Activated CD4-positive, alpha-beta T cell treated with anti-CD3 and anti-CD28 coated beads, Interleukin-2, amount 10 ng/mL, durations not matched to agents 24 days and 14 days (primary cell): ENCODE measurements at regions of chrX and their contacts with region 1.

Region 1: DNA sequence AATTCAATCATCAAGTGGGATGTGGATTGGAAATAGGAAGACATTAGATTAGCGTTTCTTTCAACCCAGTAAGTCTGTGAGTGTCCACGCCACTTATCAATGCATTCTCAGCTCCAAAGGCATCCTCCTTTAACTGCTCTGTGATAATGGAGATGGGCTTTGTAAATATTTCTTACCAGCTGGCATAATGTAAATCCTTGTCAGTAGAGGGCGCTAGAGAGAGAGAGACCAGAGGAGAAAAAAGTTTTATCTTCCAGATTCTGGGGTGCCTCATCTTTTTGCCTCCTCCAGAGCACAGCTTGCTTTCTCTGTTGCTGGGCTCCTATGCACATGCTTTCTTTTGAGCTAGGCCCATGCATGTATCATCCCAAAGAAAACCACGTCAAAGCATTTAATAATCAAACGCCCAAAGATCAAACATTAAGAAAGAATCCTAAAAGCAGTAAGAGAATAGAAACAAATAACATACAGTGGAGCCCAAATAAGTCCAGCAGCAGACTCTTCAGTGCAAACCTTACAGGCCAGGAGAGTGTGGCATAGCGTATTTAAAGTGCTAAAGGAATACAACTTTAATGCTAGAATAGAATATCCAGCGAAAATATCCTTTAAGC is 9.6 kb upstream of the MTMR1 start:
- DNase-seq: peak; percentile 75
- H3K4me3 Mint-ChIP-seq: no peak overlapping the region
- H3K27ac Mint-ChIP-seq: no peak overlapping the region
- H3K4me1 Mint-ChIP-seq: peaks cover 8% of the 10 kb centered on the region
- H3K27me3 Mint-ChIP-seq: no peaks in the 10 kb centered on the region

Region 2: DNA sequence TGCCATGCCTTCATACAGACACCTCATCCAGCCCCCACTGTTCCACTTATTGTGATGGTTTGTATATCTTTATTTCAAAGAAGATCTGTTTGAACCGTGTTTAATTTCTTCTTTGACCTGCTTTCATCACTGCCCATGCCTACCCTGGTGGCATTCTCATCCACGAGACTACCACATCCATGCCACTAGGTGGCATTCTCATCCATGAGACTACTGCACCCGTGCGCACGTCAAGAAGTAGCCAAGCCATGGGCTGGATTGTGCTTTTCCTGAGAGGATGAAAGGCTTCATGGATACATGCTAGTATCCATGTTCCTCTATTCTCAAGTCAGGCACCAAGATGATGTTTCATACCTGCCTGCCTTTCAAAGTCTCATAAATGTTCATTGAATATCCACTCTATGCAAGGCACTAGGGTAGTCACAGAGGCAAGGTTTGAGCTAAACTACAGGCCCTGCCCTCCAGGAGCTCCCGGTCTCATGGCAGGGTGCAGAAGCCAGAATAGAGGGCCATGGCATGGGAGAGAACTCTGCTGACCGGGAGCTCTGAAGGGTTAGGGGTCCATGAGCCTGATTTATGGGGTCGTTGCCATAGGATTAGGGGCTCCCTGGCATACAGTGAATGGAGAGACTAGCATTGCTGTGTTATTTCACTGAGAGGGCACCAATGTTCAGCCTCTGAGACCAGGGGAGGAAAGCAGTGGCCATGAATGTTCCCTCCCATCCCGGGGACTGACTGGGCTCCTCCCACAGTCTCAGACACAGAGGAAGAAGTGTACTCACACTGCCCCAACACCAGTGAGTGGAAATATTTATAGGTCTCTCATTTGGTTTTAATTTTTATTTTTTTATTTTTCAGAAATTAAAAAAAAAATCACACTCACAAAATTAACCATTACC is 720.5 kb before region 1 on chrX:
- intact Hi-C with region 1: loop called (anchors 5 kb)
- DNase-seq: peak; percentile 74
- H3K4me3 Mint-ChIP-seq: no peak overlapping the region
- H3K27ac Mint-ChIP-seq: no peak overlapping the region
- H3K4me1 Mint-ChIP-seq: no peaks in the 10 kb centered on the region
- H3K27me3 Mint-ChIP-seq: no peaks in the 10 kb centered on the region

Region 3: DNA sequence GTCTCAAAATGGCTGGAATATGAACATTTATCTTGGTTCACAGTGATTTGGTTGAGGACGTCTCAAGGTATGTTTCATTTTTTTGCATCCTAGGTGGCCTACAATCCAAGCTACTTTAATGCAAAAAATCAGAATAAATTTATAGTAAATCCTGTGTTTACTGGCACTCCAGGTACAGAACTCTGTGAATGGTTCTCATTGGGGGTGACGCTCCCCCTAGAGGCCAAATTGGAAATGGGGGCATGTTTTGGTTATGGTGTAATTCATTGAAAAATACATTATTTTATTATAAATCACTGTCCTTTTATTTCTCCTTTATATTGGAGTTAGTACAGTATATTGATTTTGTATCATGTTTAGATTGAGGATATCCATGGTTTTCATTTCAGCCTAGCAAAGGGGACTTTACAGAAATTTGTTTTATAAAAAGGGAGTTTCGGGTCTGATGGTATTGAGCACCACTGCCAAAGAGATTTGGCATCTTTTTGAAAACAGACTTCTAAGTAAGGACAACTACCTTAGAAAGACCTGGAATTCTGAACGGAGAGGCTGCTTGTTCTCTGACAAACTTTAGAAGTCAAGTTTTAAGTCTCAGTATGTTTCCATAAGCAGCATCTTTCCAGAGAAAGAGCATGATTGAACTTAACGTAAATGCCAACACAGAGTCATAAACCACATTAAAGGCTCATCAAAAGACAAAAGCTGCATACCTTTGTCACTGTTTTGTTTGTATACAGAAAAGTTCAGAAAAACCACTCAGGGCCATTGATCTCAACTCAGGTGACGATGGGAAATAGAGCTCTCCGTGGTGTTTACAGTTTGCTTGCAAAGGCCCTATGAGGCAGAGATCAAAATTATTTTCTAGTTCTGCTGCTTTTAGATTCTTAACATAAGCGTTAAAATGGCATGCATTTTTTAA is 95.8 kb before region 1 on chrX:
- intact Hi-C with region 1: no loop called
- DNase-seq: peak; percentile 75
- H3K4me3 Mint-ChIP-seq: no peak overlapping the region
- H3K27ac Mint-ChIP-seq: no peak overlapping the region
- H3K4me1 Mint-ChIP-seq: peaks cover 20% of the 10 kb centered on the region
- H3K27me3 Mint-ChIP-seq: no peaks in the 10 kb centered on the region

Region 4: DNA sequence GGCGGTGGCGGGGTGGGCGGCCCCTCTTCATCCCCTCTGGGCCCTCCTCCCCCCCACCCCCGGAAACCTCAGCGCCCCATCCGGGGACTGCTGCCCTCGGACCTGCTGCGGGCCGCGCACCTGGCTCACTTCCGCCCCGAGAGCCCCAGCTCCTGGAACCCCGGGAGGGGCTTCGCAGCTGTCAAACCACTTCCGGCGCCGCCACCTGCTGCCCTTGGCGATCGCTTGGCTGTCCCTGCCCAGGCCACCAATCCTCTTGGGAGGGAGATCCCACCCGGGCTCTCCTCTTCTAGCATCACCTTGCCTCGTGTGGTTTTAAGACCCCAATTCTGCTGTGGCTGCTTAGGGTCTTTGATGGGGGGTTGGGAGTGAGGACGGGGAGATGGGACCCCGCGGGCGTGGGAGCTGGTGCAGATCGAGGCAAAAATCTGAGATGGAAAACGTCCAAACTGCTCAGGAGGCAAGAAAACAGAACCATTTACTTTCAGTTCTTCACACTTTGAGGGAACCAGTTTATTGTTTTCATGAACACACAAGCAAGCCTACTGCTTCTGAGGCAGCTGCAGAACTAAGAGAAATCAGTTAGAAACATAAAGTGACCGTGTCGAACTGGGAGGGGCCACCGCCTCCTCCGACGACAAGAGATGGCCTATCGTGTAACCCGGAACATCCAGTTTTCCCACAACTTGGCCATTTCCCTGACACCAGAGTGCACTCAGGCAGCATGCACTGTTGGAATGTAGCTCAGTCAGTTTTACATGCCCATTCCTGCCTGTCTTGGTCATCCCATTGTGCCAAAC is 10.3 kb after region 1 on chrX:
- intact Hi-C with region 1: loop called (anchors 2 kb)
- DNase-seq: peak; percentile 91
- H3K4me3 Mint-ChIP-seq: peak overlapping the region; percentile 89
- H3K27ac Mint-ChIP-seq: peak overlapping the region; percentile 97
- H3K4me1 Mint-ChIP-seq: peaks cover 58% of the 10 kb centered on the region
- H3K27me3 Mint-ChIP-seq: no peaks in the 10 kb centered on the region